ENCODE measurements at regions of chr1 and their contacts with region 1.

Region 1: GRCh38 chr1:51519048-51519864 is at the start of gene EPS15:
- DNase-seq: peak; percentile 70 to 90 (median 83)
- ATAC-seq: peak; percentile 65
- H3K4me3 ChIP-seq: peak within 1 kb of the TSS; percentile 76 to 82
- H3K4me3 Mint-ChIP-seq: peak within 1 kb of the TSS; percentile 94
- H3K27ac ChIP-seq: peak within 1 kb of the TSS; percentile 47 to 81
- H3K27ac Mint-ChIP-seq: peak within 1 kb of the TSS; percentile 93
- H3K4me1 ChIP-seq: peaks cover 38% of the 10 kb centered on the region
- H3K4me1 Mint-ChIP-seq: peaks cover 57% of the 10 kb centered on the region
- H3K27me3 ChIP-seq: no peaks in the 10 kb centered on the region
- H3K27me3 Mint-ChIP-seq: no peaks in the 10 kb centered on the region
- CTCF ChIP-seq: no peak
- total RNA-seq, gene EPS15: 49.9 to 52.2 TPM

Region 2: DNA sequence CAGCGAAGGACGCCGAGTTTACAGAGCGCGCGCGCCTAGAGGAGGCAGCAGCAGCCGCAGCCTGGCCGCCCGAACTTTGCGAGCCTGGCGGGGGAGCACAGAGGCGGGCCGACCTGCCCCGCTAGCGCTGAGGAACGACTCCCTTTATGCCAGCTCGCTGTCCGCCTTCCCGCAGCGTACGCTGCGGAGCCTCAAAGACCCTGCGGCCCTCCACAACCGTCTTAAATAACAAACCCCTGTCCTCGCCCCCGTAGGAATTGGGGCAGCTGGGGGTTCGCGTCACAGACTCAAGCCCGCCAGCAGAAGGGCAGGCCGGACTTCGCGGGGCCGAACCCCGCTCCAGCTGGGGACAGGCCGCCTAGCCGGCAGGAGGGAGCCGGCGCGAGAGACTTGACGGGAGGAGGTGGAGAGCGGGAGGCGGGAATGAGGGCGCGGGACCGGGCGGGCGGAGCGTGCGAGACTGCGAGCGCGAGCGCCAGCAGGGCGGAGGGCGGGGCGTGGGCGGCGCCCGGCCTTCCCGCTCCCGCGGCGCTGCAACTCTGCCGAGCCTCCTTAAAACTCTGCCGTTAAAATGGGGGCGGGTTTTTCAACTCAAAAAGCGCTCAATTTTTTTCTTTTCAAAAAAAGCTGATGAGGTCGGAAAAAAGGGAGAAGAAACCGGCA is 551.0 kb before region 1 on chr1:
- CTCF ChIA-PET with region 1: no interaction called
- POLR2A ChIA-PET with region 1: no interaction called
- intact Hi-C with region 1: loop called in 1 of 2 experiments (anchors 5 kb)
- DNase-seq: peak; percentile 57 to 93 (median 82)
- ATAC-seq: peak; percentile 79
- H3K4me3 ChIP-seq: peak overlapping the region; percentile 88 to 97
- H3K4me3 Mint-ChIP-seq: peak overlapping the region; percentile 99
- H3K27ac ChIP-seq: peak overlapping the region; percentile 86 to 91
- H3K27ac Mint-ChIP-seq: peak overlapping the region; percentile 88
- H3K4me1 ChIP-seq: peaks cover 6% of the 10 kb centered on the region
- H3K4me1 Mint-ChIP-seq: peaks cover 27% of the 10 kb centered on the region
- H3K27me3 ChIP-seq: no peaks in the 10 kb centered on the region
- H3K27me3 Mint-ChIP-seq: no peaks in the 10 kb centered on the region
- CTCF ChIP-seq: peak; percentile 42

Region 3: GRCh38 chr1:51488372-51489050 is 30.7 kb before region 1 on chr1:
- CTCF ChIA-PET with region 1: no interaction called
- POLR2A ChIA-PET with region 1: interaction called, 3 read pairs
- intact Hi-C with region 1: loop called in 1 of 2 experiments (anchors 5 kb)
- DNase-seq: peak in 1 of 9 experiments; percentile 8
- ATAC-seq: no peak
- H3K4me3 ChIP-seq: no peak overlapping the region
- H3K4me3 Mint-ChIP-seq: no peak overlapping the region
- H3K27ac ChIP-seq: no peak overlapping the region
- H3K27ac Mint-ChIP-seq: peak overlapping the region; percentile 5
- H3K4me1 ChIP-seq: peaks cover 14% of the 10 kb centered on the region
- H3K4me1 Mint-ChIP-seq: peaks cover 33% of the 10 kb centered on the region
- H3K27me3 ChIP-seq: no peaks in the 10 kb centered on the region
- H3K27me3 Mint-ChIP-seq: no peaks in the 10 kb centered on the region
- CTCF ChIP-seq: no peak

Region 4: DNA sequence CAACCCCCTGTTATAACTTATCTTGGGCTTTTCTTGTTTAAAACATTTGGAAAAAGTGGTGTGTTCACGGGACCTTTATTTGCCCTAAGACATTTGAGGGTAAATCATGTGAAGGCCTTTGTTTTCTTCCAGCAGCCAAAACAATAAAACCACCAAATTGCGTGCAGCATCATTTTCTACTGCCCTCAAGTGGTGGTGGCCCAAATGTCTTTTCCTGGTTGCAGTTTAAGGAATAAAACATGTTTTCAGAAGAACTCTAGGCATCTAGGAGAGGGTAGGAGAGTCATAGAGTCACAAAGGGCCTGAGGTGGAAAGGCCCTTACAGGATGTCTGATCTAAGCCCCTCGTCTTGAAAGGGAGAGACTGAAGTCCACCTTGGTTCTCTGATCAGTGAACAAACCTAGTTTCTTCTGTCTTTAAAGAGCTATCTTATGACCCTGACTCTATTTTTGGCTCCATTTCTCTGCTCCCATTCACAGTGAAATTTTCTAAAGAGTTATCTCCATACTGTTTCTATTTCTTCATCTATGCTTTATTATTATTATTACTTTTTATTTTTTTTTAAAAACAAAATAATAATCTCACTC is 15.8 kb after region 1 on chr1:
- CTCF ChIA-PET with region 1: interaction called, 12 read pairs
- POLR2A ChIA-PET with region 1: interaction called, 5 read pairs
- intact Hi-C with region 1: loop called in 1 of 2 experiments (anchors 1 kb)
- DNase-seq: peak; percentile 8 to 72 (median 38)
- ATAC-seq: peak; percentile 57
- H3K4me3 ChIP-seq: no peak overlapping the region
- H3K4me3 Mint-ChIP-seq: no peak overlapping the region
- H3K27ac ChIP-seq: no peak overlapping the region
- H3K27ac Mint-ChIP-seq: peak overlapping the region; percentile 62
- H3K4me1 ChIP-seq: peaks cover 7% of the 10 kb centered on the region
- H3K4me1 Mint-ChIP-seq: peaks cover 10% of the 10 kb centered on the region
- H3K27me3 ChIP-seq: no peaks in the 10 kb centered on the region
- H3K27me3 Mint-ChIP-seq: no peaks in the 10 kb centered on the region
- CTCF ChIP-seq: peak; percentile 62

Region 5: GRCh38 chr1:51605961-51606723 is 86.9 kb after region 1 on chr1:
- CTCF ChIA-PET with region 1: no interaction called
- POLR2A ChIA-PET with region 1: no interaction called
- intact Hi-C with region 1: no loop called
- DNase-seq: no peak
- ATAC-seq: no peak
- H3K4me3 ChIP-seq: no peak overlapping the region
- H3K4me3 Mint-ChIP-seq: no peak overlapping the region
- H3K27ac ChIP-seq: no peak overlapping the region
- H3K27ac Mint-ChIP-seq: no peak overlapping the region
- H3K4me1 ChIP-seq: no peaks in the 10 kb centered on the region
- H3K4me1 Mint-ChIP-seq: no peaks in the 10 kb centered on the region
- H3K27me3 ChIP-seq: peaks cover 0 to 3% of the 10 kb centered on the region in 2 experiments
- H3K27me3 Mint-ChIP-seq: peaks cover 12% of the 10 kb centered on the region
- CTCF ChIP-seq: no peak

Region 6: DNA sequence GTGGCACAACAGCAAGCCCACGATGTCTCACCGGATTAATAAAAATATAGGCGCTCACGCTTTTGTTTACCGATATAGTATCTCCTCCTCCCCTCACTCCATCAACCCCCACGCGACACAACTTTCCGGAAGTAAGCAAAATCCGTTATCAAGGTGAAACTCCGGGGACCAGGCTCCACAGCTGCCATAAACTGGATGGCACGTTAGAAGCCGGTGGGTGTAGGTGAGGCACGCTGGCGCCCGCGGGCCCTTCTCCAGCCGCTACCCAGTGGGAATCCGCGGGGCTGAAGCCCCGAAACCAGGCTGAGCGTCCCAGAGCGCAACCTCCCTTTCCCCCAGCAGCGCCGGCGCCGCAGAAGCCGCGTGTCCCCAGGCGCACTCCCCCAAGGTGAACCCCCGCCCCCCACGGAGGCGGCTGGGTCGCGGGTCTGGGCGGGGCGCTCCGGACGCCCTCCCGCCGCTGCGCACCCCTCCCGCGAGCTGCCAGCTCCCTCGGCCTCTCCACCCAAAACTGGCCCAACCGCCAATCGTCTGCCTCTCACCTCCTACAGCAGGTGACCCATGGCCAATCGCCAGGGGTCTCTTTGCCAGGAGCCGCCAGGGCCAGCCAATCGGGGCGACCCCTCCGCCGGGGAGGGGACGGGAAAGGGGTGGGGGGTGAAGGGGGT is 210.0 kb after region 1 on chr1:
- CTCF ChIA-PET with region 1: no interaction called
- POLR2A ChIA-PET with region 1: no interaction called
- intact Hi-C with region 1: loop called (anchors 5 kb)
- DNase-seq: peak; percentile 84 to 97 (median 91)
- ATAC-seq: peak; percentile 92
- H3K4me3 ChIP-seq: peak overlapping the region; percentile 89 to 96
- H3K4me3 Mint-ChIP-seq: peak overlapping the region; percentile 94
- H3K27ac ChIP-seq: peak overlapping the region; percentile 81 to 82
- H3K27ac Mint-ChIP-seq: peak overlapping the region; percentile 91
- H3K4me1 ChIP-seq: peaks cover 22% of the 10 kb centered on the region
- H3K4me1 Mint-ChIP-seq: peaks cover 44% of the 10 kb centered on the region
- H3K27me3 ChIP-seq: no peaks in the 10 kb centered on the region
- H3K27me3 Mint-ChIP-seq: no peaks in the 10 kb centered on the region
- CTCF ChIP-seq: no peak

Region 7: GRCh38 chr1:52033190-52034049 is 514.2 kb after region 1 on chr1 and contains the start of gene KTI12:
- CTCF ChIA-PET with region 1: no interaction called
- POLR2A ChIA-PET with region 1: no interaction called
- intact Hi-C with region 1: loop called in 1 of 2 experiments (anchors 10 kb)
- DNase-seq: peak; percentile 78 to 97 (median 88)
- ATAC-seq: peak; percentile 92
- H3K4me3 ChIP-seq: peak within 1 kb of the TSS; percentile 78 to 80
- H3K4me3 Mint-ChIP-seq: peak within 1 kb of the TSS; percentile 92
- H3K27ac ChIP-seq: peak within 1 kb of the TSS; percentile 88 to 89
- H3K27ac Mint-ChIP-seq: peak within 1 kb of the TSS; percentile 95
- H3K4me1 ChIP-seq: peaks cover 30% of the 10 kb centered on the region
- H3K4me1 Mint-ChIP-seq: peaks cover 38% of the 10 kb centered on the region
- H3K27me3 ChIP-seq: no peaks in the 10 kb centered on the region
- H3K27me3 Mint-ChIP-seq: no peaks in the 10 kb centered on the region
- CTCF ChIP-seq: no peak
- total RNA-seq, gene KTI12: 23.6 to 24.7 TPM

Measured in CD8-positive, alpha-beta T cell (primary cell).